CD4-positive, alpha-beta T cell (primary cell): ENCODE measurements at regions of chr6 and their contacts with region 1.

Region 1: DNA sequence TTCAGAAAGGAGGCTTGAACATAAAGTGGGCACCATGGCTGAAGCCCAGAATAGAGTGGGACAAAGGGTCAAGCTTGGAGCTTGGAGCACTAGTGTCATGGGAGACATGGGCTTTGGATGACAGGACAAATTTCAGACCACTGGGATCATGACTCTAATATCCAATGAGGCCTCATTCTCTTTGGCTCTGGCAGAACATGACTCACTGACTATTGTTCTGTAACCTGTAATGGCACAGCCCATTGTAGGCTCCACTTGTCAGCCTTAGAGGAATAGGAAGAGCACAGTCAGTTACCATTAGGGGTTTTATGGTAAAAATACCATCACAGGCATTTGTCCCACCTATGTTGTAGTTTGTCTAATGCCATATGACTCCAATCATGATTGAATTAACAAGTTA is 34.0 kb upstream of the MMS22L start:
- DNase-seq: no peak
- ATAC-seq: no peak
- H3K4me3 ChIP-seq: no peak overlapping the region
- H3K4me3 Mint-ChIP-seq: no peak overlapping the region
- H3K27ac ChIP-seq: no peak overlapping the region
- H3K27ac Mint-ChIP-seq: no peak overlapping the region
- H3K4me1 ChIP-seq: no peaks in the 10 kb centered on the region
- H3K4me1 Mint-ChIP-seq: no peaks in the 10 kb centered on the region
- H3K27me3 ChIP-seq: no peaks in the 10 kb centered on the region
- H3K27me3 Mint-ChIP-seq: no peaks in the 10 kb centered on the region
- CTCF ChIP-seq: no peak

Region 2: DNA sequence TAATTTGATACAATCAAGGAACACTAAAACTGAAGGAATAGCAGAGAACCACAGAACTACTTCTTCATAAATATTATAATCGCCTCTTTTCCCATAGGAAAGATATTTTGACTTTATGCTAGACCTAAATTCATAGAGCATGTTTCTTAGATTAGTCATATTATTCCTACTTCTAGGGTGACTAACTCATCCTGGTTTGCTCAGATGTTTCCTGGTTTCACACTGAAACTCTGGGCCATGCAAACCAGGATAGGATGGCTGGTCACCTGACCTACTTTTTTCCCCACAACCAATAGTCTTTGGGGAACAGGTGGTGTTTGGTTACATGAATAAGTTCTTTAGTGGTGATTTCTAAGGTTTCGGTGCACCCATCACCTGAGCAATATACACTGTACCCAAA is 76.8 kb before region 1 on chr6:
- CTCF ChIA-PET with region 1: no interaction called
- POLR2A ChIA-PET with region 1: no interaction called
- intact Hi-C with region 1: loop called in 1 of 2 experiments (anchors 5 kb)
- DNase-seq: no peak
- ATAC-seq: no peak
- H3K4me3 ChIP-seq: no peak overlapping the region
- H3K4me3 Mint-ChIP-seq: no peak overlapping the region
- H3K27ac ChIP-seq: no peak overlapping the region
- H3K27ac Mint-ChIP-seq: no peak overlapping the region
- H3K4me1 ChIP-seq: no peaks in the 10 kb centered on the region
- H3K4me1 Mint-ChIP-seq: no peaks in the 10 kb centered on the region
- H3K27me3 ChIP-seq: no peaks in the 10 kb centered on the region
- H3K27me3 Mint-ChIP-seq: no peaks in the 10 kb centered on the region
- CTCF ChIP-seq: no peak